GM12878 (cell line): ENCODE measurements at regions of chr20 and their contacts with region 1.

Region 1: DNA sequence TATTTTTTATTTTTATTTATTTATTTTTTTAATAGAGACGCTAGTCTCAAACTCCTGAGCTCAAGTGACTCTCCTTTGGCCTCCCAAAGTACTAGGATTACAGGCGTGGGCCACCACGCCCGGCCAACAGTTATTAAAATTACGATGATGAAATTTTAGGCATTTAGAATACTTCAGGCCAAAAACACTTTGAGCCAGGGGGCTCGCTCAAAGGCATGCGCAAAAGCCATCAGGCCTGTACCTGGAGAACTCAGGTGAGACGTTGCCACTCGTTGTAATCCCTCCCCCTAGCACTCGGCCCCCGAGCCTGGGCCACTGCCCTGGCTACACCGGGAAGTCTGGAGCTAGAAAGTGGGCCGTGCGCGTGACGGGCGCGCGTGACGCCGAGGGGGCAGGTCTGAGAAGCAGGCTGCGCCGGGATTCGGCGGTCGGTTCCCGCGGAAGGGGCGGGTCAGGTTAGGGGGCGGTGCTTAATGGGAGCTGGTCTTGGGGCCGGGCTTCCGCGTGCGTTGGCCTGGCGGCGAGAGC is 337 bp upstream of the CBFA2T2 start:
- DNase-seq: peak; percentile 74
- ATAC-seq: peak; percentile 98
- H3K4me3 ChIP-seq: peak overlapping the region; percentile 96
- H3K27ac ChIP-seq: peak overlapping the region; percentile 76
- H3K4me1 ChIP-seq: no peaks in the 10 kb centered on the region
- H3K27me3 ChIP-seq: no peaks in the 10 kb centered on the region
- CTCF ChIP-seq: no peak
- EP300 ChIP-seq: no peak
- POLR2A ChIP-seq: peak; percentile 96
- RAD21 ChIP-seq: no peak

Region 2: DNA sequence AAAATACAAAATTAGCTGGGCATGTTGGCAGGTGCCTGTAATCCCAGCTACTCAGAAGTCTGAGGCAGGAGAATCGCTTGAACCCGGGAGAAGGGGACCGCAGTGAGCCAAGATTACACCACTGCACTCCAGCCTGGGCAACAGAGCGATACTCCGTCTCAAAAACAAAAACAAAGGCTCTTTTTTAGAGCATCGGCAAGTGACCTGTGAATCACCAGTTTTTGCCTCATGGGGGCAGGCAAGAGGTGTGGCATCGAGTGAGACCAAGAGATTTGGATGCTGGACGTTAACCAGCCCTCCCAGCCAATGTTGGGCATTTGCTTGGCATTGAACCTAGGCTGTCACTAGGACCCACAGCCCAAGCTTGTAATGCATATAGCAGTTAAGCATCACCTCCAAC is 73.6 kb before region 1 on chr20:
- CTCF ChIA-PET with region 1: no interaction called
- POLR2A ChIA-PET with region 1: no interaction called
- RAD21 ChIA-PET with region 1: no interaction called
- SMC1A ChIA-PET with region 1: no interaction called
- in situ Hi-C with region 1: no loop called
- intact Hi-C with region 1: no loop called
- DNase-seq: no peak
- ATAC-seq: peak; percentile 49
- H3K4me3 ChIP-seq: no peak overlapping the region
- H3K27ac ChIP-seq: no peak overlapping the region
- H3K4me1 ChIP-seq: no peaks in the 10 kb centered on the region
- H3K27me3 ChIP-seq: no peaks in the 10 kb centered on the region
- CTCF ChIP-seq: peak; percentile 24 to 44 (median 26); a peak in 4 of 6 replicates
- EP300 ChIP-seq: no peak
- POLR2A ChIP-seq: no peak
- RAD21 ChIP-seq: peak; percentile 46

Region 3: GRCh38 chr20:33477386-33478234 is 11.9 kb before region 1 on chr20:
- CTCF ChIA-PET with region 1: no interaction called
- POLR2A ChIA-PET with region 1: no interaction called
- RAD21 ChIA-PET with region 1: no interaction called
- SMC1A ChIA-PET with region 1: no interaction called
- in situ Hi-C with region 1: no loop called
- intact Hi-C with region 1: no loop called
- DNase-seq: no peak
- ATAC-seq: no peak
- H3K4me3 ChIP-seq: no peak overlapping the region
- H3K27ac ChIP-seq: no peak overlapping the region
- H3K4me1 ChIP-seq: no peaks in the 10 kb centered on the region
- H3K27me3 ChIP-seq: no peaks in the 10 kb centered on the region
- CTCF ChIP-seq: no peak
- EP300 ChIP-seq: no peak
- POLR2A ChIP-seq: no peak
- RAD21 ChIP-seq: no peak

Region 4: DNA sequence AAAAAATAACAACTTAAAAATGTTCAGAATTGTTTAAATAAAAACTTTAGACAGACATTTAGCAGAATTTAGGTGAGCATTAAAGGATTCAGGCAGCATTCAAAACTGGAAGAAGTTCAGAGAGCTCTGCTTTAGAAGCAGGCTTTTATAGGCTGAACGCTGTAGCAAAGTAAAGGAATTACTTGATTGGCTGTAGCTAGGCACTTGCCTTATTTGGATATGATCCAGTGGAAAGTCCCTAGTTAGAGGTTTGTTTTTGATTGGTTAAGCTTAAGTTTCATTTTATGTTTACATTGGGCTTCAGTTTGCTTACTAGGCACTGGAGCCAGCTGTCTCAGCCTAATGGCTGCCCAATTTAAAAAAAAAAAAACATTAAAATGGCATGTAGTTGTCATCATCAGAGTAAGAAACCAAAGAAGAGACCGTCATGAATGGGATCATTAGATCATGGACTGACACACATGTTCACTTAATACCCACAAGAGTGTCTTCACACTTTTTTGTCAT is 65.4 kb after region 1 on chr20:
- CTCF ChIA-PET with region 1: no interaction called
- POLR2A ChIA-PET with region 1: interaction called, 11 read pairs
- RAD21 ChIA-PET with region 1: interaction called, 14 read pairs
- SMC1A ChIA-PET with region 1: interaction called, 6 read pairs
- in situ Hi-C with region 1: no loop called
- intact Hi-C with region 1: no loop called
- DNase-seq: peak; percentile 94
- ATAC-seq: peak; percentile 100
- H3K4me3 ChIP-seq: no peak overlapping the region
- H3K27ac ChIP-seq: peak overlapping the region; percentile 82
- H3K4me1 ChIP-seq: peaks cover 15% of the 10 kb centered on the region
- H3K27me3 ChIP-seq: no peaks in the 10 kb centered on the region
- CTCF ChIP-seq: no peak
- EP300 ChIP-seq: peak in 1 of 2 experiments; percentile 43; a peak in 2 of 4 replicates
- POLR2A ChIP-seq: peak; percentile 55; the same call in 1 of the 2 replicates
- RAD21 ChIP-seq: no peak